Mammary epithelial cell (primary cell): ENCODE measurements at regions of chr20 and their contacts with region 1.

Region 1: DNA sequence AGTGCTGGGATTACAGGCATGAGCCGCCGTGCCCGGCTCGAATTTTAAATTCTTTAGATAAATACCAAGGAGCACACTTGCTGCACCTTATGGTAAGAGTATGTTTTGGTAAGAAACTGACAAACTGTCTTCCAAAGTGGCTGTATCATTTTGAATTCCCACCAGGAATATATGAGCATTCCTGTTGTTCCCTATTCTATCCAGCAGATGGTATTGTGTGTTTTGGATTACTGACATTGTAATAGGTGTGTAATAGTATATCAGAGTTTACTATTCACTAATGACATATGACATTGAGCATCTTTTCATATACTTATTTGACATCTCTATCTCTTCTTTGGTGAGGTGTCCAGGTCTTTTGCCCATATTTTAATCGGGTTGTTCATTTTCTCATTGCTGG is 40.5 kb downstream of the TGM6 start:
- DNase-seq: no peak
- H3K4me3 ChIP-seq: no peak overlapping the region
- H3K27ac ChIP-seq: no peak overlapping the region
- H3K4me1 ChIP-seq: no peaks in the 10 kb centered on the region
- H3K27me3 ChIP-seq: no peaks in the 10 kb centered on the region
- CTCF ChIP-seq: peak; percentile 37 to 41

Region 2: GRCh38 chr20:1741309-1742048 is 679.8 kb before region 1 on chr20:
- CTCF ChIA-PET with region 1: no interaction called
- dilution Hi-C with region 1: no loop called
- in situ Hi-C with region 1: no loop called
- intact Hi-C with region 1: no loop called
- DNase-seq: no peak
- H3K4me3 ChIP-seq: no peak overlapping the region
- H3K27ac ChIP-seq: no peak overlapping the region
- H3K4me1 ChIP-seq: no peaks in the 10 kb centered on the region
- H3K27me3 ChIP-seq: no peaks in the 10 kb centered on the region
- CTCF ChIP-seq: no peak

Region 3: DNA sequence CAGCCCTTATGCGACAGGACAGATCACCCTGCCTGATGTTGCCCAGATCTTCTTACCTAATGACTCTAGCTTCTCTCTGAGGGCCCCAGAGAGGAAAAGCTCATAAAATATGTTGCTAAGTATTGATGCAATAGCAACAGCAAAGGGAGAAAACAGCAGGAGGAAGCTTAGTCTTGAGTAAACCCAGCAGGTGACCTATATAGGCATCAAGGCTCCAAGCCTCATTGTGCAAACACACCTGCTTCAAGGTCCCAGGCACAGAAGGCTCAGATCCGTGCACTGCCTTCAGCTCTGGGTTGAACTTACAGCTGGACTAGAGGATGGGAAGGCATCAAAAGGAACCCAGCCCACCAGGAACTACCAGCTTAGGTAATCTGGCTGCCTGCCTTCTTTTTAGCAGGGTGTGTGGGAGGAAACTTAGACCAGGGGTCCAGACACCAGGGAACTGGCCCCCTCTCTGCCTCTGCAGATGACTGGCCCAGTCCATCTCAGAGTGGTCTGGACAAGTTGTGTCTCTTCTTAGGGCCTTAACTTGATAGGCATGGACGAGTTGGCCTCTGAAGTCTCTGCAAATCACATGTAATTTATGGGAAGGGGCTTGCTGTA is 91.1 kb before region 1 on chr20:
- CTCF ChIA-PET with region 1: no interaction called
- dilution Hi-C with region 1: loop called (anchors 5 kb)
- in situ Hi-C with region 1: no loop called
- intact Hi-C with region 1: no loop called
- DNase-seq: no peak
- H3K4me3 ChIP-seq: no peak overlapping the region
- H3K27ac ChIP-seq: no peak overlapping the region
- H3K4me1 ChIP-seq: no peaks in the 10 kb centered on the region
- H3K27me3 ChIP-seq: peaks cover 4% of the 10 kb centered on the region
- CTCF ChIP-seq: no peak

Region 4: DNA sequence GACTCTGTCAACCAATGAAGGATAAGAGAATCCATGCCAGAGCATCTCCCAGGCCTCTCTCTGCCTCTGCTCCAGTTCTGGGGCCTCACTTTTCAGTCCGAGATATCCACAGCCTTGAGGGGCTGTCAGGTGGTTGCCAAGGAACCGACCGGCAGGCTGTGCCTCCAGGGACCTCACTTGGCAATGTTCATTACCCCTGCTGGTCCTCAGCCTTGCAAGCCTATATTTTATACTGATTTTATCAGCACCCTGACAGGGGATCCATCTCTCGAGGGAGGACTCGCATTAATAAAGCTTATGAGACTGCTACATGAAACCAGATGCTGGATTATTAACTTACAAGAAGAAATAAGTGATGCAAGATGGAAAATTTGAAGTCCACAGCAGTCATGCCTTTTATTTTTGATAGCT is 155.1 kb after region 1 on chr20:
- CTCF ChIA-PET with region 1: no interaction called
- dilution Hi-C with region 1: no loop called
- in situ Hi-C with region 1: no loop called
- intact Hi-C with region 1: no loop called
- DNase-seq: no peak
- H3K4me3 ChIP-seq: no peak overlapping the region
- H3K27ac ChIP-seq: no peak overlapping the region
- H3K4me1 ChIP-seq: no peaks in the 10 kb centered on the region
- H3K27me3 ChIP-seq: peaks cover 8% of the 10 kb centered on the region
- CTCF ChIP-seq: no peak

Region 5: DNA sequence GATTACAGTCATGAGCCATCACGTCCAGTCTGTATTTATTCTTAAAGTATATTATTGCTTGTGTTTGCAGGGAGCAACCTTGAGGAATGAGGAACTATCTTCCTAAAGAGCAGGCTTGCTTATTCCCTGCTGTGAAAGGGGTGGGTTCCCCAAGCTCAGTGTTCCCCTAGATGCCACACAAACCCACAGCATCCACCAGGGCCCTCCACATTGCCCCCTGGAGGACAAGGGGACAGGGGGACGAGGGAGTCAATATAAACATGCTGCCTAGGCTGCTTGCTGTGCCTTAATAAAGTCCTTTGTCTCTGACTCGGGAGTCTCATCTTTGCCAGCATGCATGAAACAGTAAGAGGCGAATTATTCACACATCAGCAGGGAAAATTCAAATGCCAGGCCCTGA is 250.7 kb after region 1 on chr20:
- CTCF ChIA-PET with region 1: no interaction called
- dilution Hi-C with region 1: no loop called
- in situ Hi-C with region 1: no loop called
- intact Hi-C with region 1: loop called (anchors 5 kb)
- DNase-seq: no peak
- H3K4me3 ChIP-seq: no peak overlapping the region
- H3K27ac ChIP-seq: no peak overlapping the region
- H3K4me1 ChIP-seq: no peaks in the 10 kb centered on the region
- H3K27me3 ChIP-seq: no peaks in the 10 kb centered on the region
- CTCF ChIP-seq: peak in 1 of 2 donors; percentile 12